ENCODE measurements at regions of chr6 and their contacts with region 1.

Region 1: GRCh38 chr6:112010328-112010727 is 43.6 kb upstream of the CCN6 start:
- H3K4me3 ChIP-seq: no peak overlapping the region
- H3K27ac ChIP-seq: no peak overlapping the region
- H3K4me1 ChIP-seq: peaks cover 5% of the 10 kb centered on the region
- CTCF ChIP-seq: peak; percentile 33

Region 2: GRCh38 chr6:111997078-111997852 is 13.1 kb before region 1 on chr6:
- CTCF ChIA-PET with region 1: interaction called, 18 read pairs
- POLR2A ChIA-PET with region 1: no interaction called
- H3K4me3 ChIP-seq: no peak overlapping the region
- H3K27ac ChIP-seq: no peak overlapping the region
- H3K4me1 ChIP-seq: no peaks in the 10 kb centered on the region
- CTCF ChIP-seq: peak; percentile 83

Region 3: DNA sequence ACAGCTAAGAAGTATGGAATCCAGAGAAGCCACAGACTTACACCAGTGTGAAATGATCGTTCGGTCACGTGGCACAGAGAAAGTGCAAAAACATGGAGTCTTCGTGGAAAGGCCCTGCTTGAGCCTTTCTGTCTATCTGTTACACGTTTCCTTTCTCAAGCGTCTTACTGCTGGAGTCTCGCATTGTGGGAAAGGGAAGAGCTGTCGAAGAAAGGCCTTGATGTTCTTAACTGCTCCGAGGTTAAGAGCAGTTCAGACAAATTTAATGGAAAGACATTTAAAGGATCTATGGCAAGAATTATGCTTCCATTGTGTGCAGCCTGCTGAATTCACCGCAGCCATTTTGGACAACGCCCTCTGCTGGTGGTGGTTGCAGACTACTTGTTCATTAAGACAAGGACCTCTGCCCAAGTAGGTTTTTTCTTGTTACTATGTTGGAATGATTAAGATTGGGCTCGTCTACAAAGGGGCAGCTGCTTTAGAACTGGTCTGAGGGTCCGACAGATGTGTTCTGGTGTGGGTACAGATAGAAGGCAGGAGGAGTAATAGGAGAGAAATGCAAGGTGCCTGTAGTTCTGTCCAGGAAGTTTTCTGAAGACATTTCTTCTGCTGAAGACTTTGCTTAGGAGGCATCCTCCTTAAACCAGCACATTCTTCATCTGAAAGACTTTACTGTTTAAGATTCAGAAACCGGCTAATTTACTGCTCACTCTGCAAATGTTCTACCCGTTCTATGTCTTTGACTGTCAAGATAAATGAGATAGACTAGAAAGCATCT is 18.9 kb after region 1 on chr6:
- CTCF ChIA-PET with region 1: interaction called, 13 read pairs
- POLR2A ChIA-PET with region 1: no interaction called
- H3K4me3 ChIP-seq: no peak overlapping the region
- H3K27ac ChIP-seq: no peak overlapping the region
- H3K4me1 ChIP-seq: no peaks in the 10 kb centered on the region
- CTCF ChIP-seq: peak; percentile 47; the same call in 1 of the 2 replicates

Region 4: DNA sequence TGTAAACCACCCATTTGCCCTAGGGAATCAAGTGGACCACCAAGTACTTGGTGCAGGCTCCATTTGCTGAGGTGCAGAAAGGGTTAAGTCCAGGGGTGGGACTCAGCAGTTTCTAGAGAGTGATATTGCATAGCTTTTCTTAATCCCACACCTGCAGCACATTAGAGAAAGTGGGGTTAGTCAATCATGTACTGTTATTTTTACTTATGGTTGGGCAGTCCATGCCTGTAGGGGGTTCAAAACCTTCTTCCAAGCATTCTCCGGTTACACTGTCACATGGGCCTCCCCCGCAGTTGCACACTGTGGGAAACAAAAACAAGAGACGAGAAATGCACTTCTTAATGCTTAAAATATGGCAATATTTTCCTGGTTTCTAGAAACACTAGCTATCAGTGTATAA is 178.6 kb after region 1 on chr6:
- CTCF ChIA-PET with region 1: no interaction called
- POLR2A ChIA-PET with region 1: no interaction called
- H3K4me3 ChIP-seq: no peak overlapping the region
- H3K27ac ChIP-seq: peak overlapping the region; percentile 60
- H3K4me1 ChIP-seq: peaks cover 16% of the 10 kb centered on the region
- CTCF ChIP-seq: no peak

Measured in HEK293 (cell line).